ENCODE measurements at regions of chr4 and their contacts with region 1.

Region 1: DNA sequence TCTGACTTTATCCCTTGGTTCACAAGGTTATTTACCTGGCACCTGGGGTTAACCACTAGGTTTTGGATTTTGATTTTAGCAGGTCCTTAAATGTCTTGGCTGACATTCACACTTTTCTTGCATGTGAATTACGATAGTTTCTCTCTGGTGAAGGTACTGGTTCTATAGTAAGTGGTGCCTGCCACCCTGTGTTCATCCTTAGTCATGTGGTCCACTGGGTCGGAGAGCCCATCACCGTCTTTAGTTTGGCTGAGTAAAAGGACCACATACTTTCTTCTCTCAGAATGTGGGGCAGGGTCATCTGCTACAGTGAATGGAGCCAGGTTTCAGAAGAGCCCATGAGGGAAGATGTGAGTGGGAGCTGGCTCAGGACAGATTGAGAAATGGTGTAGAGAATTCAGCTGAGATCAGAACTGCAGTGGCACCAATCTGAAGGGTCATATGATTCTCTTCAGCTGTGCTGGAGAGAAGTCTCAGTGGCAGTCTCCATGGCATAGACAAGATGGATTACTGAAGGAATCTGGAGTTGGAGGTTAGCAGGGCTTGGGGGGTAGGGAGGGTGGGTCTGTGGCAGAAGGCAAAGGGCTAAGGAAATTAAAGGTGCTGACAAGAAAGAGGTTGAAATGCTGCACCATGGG is 310.4 kb downstream of the GPAT3 start:
- DNase-seq: no peak
- ATAC-seq: peak in 1 of 2 donors; percentile 64
- H3K4me3 ChIP-seq: no peak overlapping the region
- H3K27ac ChIP-seq: no peak overlapping the region
- H3K4me1 ChIP-seq: no peaks in the 10 kb centered on the region
- H3K27me3 ChIP-seq: no peaks in the 10 kb centered on the region

Region 2: DNA sequence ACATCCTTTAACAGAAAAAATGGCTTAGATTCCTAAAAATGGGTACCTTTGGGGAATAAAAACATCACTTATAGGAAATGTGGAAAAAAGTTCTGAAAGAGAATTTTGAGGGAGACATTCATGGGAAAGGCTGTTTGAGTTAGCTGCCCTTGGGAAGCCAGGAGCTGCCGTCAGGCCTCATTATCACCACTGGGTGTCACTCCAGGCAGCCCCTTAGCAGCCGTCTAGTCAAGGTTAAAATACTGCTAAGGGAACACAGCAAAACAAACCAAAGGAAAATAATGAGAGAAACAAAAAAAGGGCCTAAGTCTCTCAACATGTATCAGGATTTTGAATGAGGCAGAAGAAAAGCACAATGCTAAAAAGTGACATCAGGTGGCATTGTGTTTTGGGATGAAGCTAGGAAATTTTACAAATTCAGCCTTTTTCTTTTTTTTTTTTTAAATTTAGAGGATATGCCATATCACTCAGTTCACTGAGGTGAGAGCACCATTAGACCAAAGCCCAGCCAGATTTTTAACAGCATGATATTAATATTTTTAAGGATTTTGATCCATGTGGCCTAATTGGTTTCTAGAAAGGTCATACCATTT is 75.1 kb before region 1 on chr4:
- intact Hi-C with region 1: loop called in 3 of 4 experiments (anchors 2 to 10 kb)
- DNase-seq: peak in 2 of 3 donors; percentile 16 to 59
- ATAC-seq: peak in 1 of 2 donors; percentile 61
- H3K4me3 ChIP-seq: no peak overlapping the region
- H3K27ac ChIP-seq: no peak overlapping the region
- H3K4me1 ChIP-seq: no peaks in the 10 kb centered on the region
- H3K27me3 ChIP-seq: no peaks in the 10 kb centered on the region

Region 3: DNA sequence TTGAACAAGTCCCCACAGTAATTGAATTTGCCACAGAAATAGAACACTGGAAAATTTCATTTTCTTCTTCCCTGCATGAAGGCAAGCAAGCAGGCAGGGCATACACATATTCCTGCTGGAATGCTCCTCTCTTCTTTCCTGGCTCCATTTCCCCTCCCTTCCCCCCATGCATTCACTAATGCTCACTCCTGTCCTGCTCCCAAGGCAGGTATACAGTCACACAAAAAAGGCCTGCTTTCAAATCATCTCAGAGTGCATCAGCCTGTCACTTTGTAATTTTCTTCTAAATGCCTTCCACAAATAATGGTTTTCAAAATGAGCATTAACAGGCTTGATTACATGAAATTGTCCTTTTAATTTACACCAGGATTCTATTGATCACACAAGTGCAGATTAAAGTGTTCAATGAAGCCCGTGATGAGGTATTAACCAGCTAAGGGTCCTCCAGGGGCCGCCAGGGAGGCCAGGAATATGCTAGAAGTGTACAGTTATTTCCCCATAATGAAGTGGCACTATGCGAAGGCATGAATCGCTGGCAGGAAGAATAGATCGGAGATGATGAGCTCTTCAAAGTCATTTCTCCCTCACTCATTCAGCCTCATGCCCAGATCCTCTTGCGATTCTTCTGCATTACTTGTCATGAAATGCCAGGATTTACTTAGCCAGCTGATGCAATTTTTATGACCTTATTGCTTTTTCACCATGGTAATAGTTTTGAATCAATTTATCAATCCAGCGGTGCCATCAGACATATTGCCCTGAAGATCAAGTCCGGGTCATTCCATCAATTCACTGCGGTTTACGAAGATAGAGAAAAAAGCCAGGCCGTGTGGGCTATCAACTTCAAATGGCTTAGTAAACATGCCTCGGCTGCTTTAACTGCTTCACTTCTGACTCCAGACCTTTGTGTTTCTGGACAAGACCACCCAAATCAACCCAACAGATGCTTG is 66.9 kb before region 1 on chr4:
- intact Hi-C with region 1: loop called in 2 of 4 experiments (anchors 5 to 10 kb)
- DNase-seq: no peak
- ATAC-seq: no peak
- H3K4me3 ChIP-seq: no peak overlapping the region
- H3K27ac ChIP-seq: no peak overlapping the region
- H3K4me1 ChIP-seq: no peaks in the 10 kb centered on the region
- H3K27me3 ChIP-seq: no peaks in the 10 kb centered on the region